PC-3 (cell line): ENCODE measurements at regions of chr3 and their contacts with region 1.

Region 1: GRCh38 chr3:97719156-97719821 is 45.3 kb upstream of the ARL6 start:
- DNase-seq: peak; percentile 88
- ATAC-seq: peak; percentile 94
- H3K4me3 ChIP-seq: peak overlapping the region; percentile 37; the same call in 1 of the 2 replicates
- H3K27ac ChIP-seq: no peak overlapping the region
- H3K4me1 ChIP-seq: no peaks in the 10 kb centered on the region
- H3K27me3 ChIP-seq: no peaks in the 10 kb centered on the region
- CTCF ChIP-seq: peak; percentile 98

Region 2: GRCh38 chr3:97680210-97680609 is 39.1 kb before region 1 on chr3:
- CTCF ChIA-PET with region 1: interaction called, 4 read pairs
- POLR2A ChIA-PET with region 1: no interaction called
- intact Hi-C with region 1: loop called (anchors 2 kb)
- DNase-seq: no peak
- ATAC-seq: peak; percentile 54
- H3K4me3 ChIP-seq: no peak overlapping the region
- H3K27ac ChIP-seq: no peak overlapping the region
- H3K4me1 ChIP-seq: no peaks in the 10 kb centered on the region
- H3K27me3 ChIP-seq: peaks cover 14% of the 10 kb centered on the region
- CTCF ChIP-seq: no peak